MCF 10A (cell line): ENCODE measurements at regions of chr3 and their contacts with region 1.

Region 1: DNA sequence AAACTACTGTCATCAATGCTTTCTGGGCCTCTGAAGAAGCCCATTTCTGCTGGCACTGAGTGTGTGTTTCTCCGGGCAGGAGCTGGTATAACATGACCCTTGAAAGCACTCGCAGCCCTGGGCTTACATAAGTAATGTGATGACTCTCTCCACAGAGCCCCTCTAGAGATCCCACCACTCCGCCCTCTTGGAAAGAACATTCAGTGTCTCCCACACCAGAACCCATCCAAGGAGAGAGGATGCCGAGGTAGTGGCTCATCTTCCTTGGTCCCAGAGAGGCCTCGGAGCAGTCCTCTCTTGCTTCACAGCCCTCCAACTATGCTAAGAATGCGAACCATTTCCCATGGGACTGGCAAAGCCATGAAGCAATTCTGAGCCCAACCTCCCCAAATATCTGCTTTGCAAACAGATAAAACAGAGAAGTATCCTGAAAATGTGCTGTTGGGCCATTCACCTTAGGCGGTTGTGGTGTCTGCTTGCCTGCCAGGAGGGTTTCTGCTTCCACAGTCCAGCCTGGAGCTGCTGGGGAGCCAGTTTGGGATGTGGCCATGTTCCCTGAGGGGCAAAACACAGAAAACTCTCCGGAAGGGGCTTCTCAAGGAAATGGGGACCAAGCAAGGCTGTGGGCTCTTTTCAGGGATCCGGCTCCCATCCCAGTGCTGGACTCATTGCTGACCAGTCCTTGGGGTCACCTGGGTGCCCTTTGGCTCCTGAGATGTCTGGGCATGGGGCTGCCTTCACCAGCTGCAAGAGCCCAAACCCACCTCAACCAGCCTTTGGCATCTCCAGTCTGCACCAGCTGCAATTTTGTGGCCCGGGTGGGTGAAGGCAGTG is 47.3 kb downstream of the AMOTL2 start:
- DNase-seq: peak; percentile 96
- H3K4me3 Mint-ChIP-seq: peak overlapping the region; percentile 50
- H3K27ac Mint-ChIP-seq: peak overlapping the region; percentile 52
- H3K4me1 Mint-ChIP-seq: peaks cover 72% of the 10 kb centered on the region
- H3K27me3 Mint-ChIP-seq: no peaks in the 10 kb centered on the region
- CTCF ChIP-seq: no peak

Region 2: GRCh38 chr3:134287512-134287911 is 39.5 kb before region 1 on chr3:
- CTCF ChIA-PET with region 1: no interaction called
- POLR2A ChIA-PET with region 1: no interaction called
- intact Hi-C with region 1: no loop called
- DNase-seq: no peak
- H3K4me3 Mint-ChIP-seq: no peak overlapping the region
- H3K27ac Mint-ChIP-seq: no peak overlapping the region
- H3K4me1 Mint-ChIP-seq: peaks cover 15% of the 10 kb centered on the region
- H3K27me3 Mint-ChIP-seq: peaks cover 8% of the 10 kb centered on the region
- CTCF ChIP-seq: no peak

Region 3: GRCh38 chr3:134299185-134299887 is 27.6 kb before region 1 on chr3:
- CTCF ChIA-PET with region 1: no interaction called
- POLR2A ChIA-PET with region 1: no interaction called
- intact Hi-C with region 1: no loop called
- DNase-seq: peak; percentile 47
- H3K4me3 Mint-ChIP-seq: no peak overlapping the region
- H3K27ac Mint-ChIP-seq: peak overlapping the region; percentile 73
- H3K4me1 Mint-ChIP-seq: peaks cover 15% of the 10 kb centered on the region
- H3K27me3 Mint-ChIP-seq: no peaks in the 10 kb centered on the region
- CTCF ChIP-seq: peak; percentile 15

Region 4: DNA sequence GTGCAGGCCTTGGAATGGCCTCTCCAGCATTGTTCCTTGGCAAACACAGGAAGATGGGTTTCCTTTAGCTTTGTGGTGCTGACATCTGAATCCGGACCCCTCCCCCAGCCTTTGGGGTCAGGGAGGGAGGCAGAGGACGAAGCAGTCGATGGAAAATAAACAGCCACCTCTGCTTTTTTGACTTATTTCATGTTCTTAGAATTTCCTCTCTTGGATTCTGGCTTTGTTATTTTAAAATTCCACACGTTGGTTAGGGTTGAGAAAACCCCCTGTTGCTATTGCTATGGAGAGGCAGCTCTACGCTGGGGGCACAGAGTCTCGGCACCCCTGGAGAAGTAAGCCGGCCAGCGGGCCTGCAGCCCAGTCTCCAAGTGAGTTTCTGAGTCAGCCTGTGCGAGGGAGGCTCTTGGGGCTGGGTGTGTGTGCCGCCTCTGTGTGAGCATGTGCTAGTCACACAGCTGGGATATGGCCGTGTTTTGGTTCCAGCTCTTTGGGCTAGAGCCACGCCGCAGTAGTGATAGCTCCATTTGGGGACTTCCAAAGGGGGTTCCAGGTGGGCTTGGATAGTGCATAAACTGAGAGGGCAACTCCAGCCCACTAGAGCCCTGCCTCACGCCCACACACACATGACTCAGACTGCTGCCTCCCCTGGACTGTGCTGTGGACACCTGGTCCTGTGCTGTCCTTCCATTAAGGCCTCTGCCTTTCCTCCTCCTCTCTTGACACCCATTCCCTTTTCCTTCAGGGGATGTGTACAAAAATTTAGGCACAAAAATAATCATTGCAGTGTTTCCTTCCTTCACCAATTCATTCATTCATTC is 11.5 kb before region 1 on chr3:
- CTCF ChIA-PET with region 1: interaction called, 5 read pairs
- POLR2A ChIA-PET with region 1: interaction called, 15 read pairs
- intact Hi-C with region 1: loop called (anchors 1 kb)
- DNase-seq: peak; percentile 84
- H3K4me3 Mint-ChIP-seq: no peak overlapping the region
- H3K27ac Mint-ChIP-seq: peak overlapping the region; percentile 21
- H3K4me1 Mint-ChIP-seq: peaks cover 47% of the 10 kb centered on the region
- H3K27me3 Mint-ChIP-seq: no peaks in the 10 kb centered on the region
- CTCF ChIP-seq: no peak

Region 5: GRCh38 chr3:134348524-134348923 is 21.5 kb after region 1 on chr3:
- CTCF ChIA-PET with region 1: interaction called, 6 read pairs
- POLR2A ChIA-PET with region 1: interaction called, 95 read pairs
- intact Hi-C with region 1: loop called (anchors 2 kb)
- DNase-seq: peak; percentile 56
- H3K4me3 Mint-ChIP-seq: no peak overlapping the region
- H3K27ac Mint-ChIP-seq: peak overlapping the region; percentile 77
- H3K4me1 Mint-ChIP-seq: peaks cover 39% of the 10 kb centered on the region
- H3K27me3 Mint-ChIP-seq: no peaks in the 10 kb centered on the region
- CTCF ChIP-seq: no peak

Region 6: DNA sequence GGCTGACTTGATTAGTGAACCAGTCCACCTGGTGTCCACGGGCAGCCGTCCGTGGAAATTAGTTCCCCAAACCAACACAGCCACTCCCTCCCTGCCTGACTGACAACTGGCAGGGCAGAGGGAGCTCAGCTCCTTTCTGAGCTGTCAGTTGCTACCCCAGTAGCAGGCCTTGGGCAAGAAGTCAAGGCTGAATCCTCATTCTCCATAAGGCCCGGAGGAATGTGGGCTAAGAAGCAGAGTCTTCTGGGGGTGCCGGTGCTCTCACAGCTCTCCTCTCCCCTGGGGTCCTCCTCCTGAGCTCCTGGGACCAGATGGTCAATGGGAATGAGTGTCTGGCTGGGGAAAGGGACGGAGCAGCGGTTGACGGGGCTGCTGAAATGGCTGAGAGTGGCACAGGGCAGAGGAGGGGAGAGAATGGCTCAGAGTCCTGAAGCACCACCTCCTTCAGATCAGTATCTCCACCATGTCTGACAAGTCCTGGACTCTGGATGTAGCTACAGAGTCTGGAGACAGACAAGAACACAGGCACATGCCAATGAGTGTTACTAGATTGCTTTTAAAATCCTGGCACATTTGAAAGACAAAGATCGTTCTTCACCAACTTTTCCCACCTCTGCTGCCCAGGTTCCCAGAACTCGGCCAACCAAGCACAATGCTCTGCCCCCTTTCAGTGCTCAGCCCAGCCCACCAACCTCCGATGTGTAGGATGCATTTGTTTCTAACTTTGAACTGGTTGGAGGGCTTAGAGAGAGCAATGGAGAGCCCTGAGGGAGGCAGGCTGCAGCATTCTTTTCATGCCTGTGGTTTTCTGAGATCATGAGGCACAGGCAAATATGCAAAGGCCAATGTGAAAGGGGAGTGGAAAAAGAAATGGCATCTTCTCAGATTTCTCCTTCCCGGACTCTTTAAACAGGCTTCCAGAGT is 30.5 kb after region 1 on chr3:
- CTCF ChIA-PET with region 1: interaction called, 12 read pairs
- POLR2A ChIA-PET with region 1: interaction called, 95 read pairs
- intact Hi-C with region 1: loop called (anchors 2 kb)
- DNase-seq: peak; percentile 90
- H3K4me3 Mint-ChIP-seq: peak overlapping the region; percentile 12
- H3K27ac Mint-ChIP-seq: peak overlapping the region; percentile 27
- H3K4me1 Mint-ChIP-seq: peaks cover 41% of the 10 kb centered on the region
- H3K27me3 Mint-ChIP-seq: no peaks in the 10 kb centered on the region
- CTCF ChIP-seq: no peak

Region 7: GRCh38 chr3:134364061-134364935 is 37.3 kb after region 1 on chr3:
- CTCF ChIA-PET with region 1: interaction called, 13 read pairs
- POLR2A ChIA-PET with region 1: interaction called, 45 read pairs
- intact Hi-C with region 1: loop called (anchors 2 kb)
- DNase-seq: peak; percentile 96
- H3K4me3 Mint-ChIP-seq: peak overlapping the region; percentile 29
- H3K27ac Mint-ChIP-seq: peak overlapping the region; percentile 28
- H3K4me1 Mint-ChIP-seq: peaks cover 30% of the 10 kb centered on the region
- H3K27me3 Mint-ChIP-seq: no peaks in the 10 kb centered on the region
- CTCF ChIP-seq: no peak

Region 8: GRCh38 chr3:134485718-134486576 is 159.0 kb after region 1 on chr3 and contains the starts of genes ANAPC13 and CEP63:
- CTCF ChIA-PET with region 1: interaction called, 4 read pairs
- POLR2A ChIA-PET with region 1: interaction called, 10 read pairs
- intact Hi-C with region 1: no loop called
- DNase-seq: peak; percentile 98
- H3K4me3 Mint-ChIP-seq: peak within 1 kb of the TSS; percentile 75
- H3K27ac Mint-ChIP-seq: peak within 1 kb of the TSS; percentile 87
- H3K4me1 Mint-ChIP-seq: peaks cover 31% of the 10 kb centered on the region
- H3K27me3 Mint-ChIP-seq: no peaks in the 10 kb centered on the region
- CTCF ChIP-seq: no peak
- total RNA-seq, gene ANAPC13: 61.5 and 78.4 TPM in 2 replicates
- total RNA-seq, gene CEP63: 37.0 and 40.0 TPM in 2 replicates

Region 9: DNA sequence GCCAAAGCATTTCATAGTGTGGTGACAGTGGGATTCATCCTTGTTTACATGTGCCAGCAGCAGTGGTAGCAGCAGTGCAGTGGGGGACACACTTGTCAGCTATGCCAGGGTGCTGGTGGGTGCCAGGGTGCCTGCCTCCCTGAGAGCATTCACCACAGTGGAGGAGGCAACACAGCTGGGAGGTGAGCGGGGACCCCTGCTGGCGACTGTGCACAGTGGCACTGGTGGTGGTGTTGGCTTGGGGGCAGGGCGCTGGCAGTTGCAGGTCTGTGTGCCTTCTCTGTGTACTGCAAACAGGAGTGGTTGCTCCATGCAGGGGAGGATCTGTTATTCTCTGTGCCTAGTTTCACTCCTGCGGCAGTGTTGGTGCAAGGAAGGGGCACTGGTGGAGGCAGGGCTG is 200.1 kb after region 1 on chr3:
- CTCF ChIA-PET with region 1: no interaction called
- POLR2A ChIA-PET with region 1: no interaction called
- intact Hi-C with region 1: no loop called
- DNase-seq: peak; percentile 13
- H3K4me3 Mint-ChIP-seq: no peak overlapping the region
- H3K27ac Mint-ChIP-seq: no peak overlapping the region
- H3K4me1 Mint-ChIP-seq: no peaks in the 10 kb centered on the region
- H3K27me3 Mint-ChIP-seq: no peaks in the 10 kb centered on the region
- CTCF ChIP-seq: peak; percentile 18